HEK293 (cell line): ENCODE measurements at regions of chr6 and their contacts with region 1.

Region 1: GRCh38 chr6:31827286-31828079 is at the start of gene HSPA1B:
- H3K4me3 ChIP-seq: peak within 1 kb of the TSS; percentile 65
- H3K27ac ChIP-seq: peak within 1 kb of the TSS; percentile 69
- H3K4me1 ChIP-seq: no peaks in the 10 kb centered on the region
- CTCF ChIP-seq: peak; percentile 35; the same call in 1 of the 2 replicates

Region 2: DNA sequence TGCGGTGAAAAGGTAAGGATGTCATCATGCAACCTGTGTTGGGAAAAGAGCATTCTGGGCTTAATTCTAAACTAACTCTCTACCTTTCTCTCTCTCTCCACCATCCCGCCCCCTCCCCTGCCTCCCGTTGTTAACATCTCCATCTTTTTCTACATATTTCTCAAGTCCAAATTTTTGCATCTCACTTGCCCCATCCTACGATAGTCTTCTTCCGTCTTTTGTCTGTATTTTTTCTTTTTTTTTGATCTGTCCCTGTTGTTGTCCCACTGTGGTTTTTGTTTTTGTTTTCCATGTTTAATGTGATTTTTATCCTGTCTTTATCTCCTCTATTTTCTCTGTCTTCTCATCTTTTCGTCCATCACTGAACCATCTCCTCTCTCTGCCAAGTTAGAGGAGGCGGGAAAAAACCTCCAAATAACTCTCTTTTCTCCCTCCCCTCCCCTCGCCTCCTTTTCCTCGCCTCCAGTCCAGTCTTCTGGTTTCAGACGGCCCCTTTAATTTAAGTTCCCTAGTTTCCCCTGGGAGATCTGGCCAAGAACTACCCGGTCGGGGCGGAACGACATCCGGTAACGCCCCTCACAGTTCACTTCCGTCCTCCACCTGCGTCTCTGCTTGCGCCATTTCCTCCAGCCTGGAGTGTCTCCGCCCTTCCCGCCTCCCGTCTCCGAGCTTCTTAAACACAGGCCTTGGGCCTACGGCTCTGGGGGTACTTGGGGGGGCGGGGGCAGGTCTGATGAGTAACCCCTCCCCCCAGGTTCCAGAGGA is 280.3 kb before region 1 on chr6 and contains the start of gene NFKBIL1:
- CTCF ChIA-PET with region 1: interaction called, 5 read pairs
- POLR2A ChIA-PET with region 1: interaction called, 30 read pairs
- H3K4me3 ChIP-seq: peak within 1 kb of the TSS; percentile 47
- H3K27ac ChIP-seq: peak within 1 kb of the TSS; percentile 50
- H3K4me1 ChIP-seq: peaks cover 2% of the 10 kb centered on the region; the same call in 1 of the 2 replicates
- CTCF ChIP-seq: no peak; the same call in 1 of the 2 replicates

Region 3: GRCh38 chr6:31680840-31681671 is 146.4 kb before region 1 on chr6 and contains the start of gene LY6G5C:
- CTCF ChIA-PET with region 1: interaction called, 6 read pairs
- POLR2A ChIA-PET with region 1: interaction called, 15 read pairs
- H3K4me3 ChIP-seq: peak within 1 kb of the TSS; percentile 27
- H3K27ac ChIP-seq: no peak within 1 kb of the TSS; the same call in 1 of the 2 replicates
- H3K4me1 ChIP-seq: no peaks in the 10 kb centered on the region; the same call in 1 of the 2 replicates
- CTCF ChIP-seq: peak; percentile 68; the same call in 1 of the 2 replicates

Region 4: GRCh38 chr6:31739639-31740396 is 87.7 kb before region 1 on chr6 and contains the start of gene MSH5:
- CTCF ChIA-PET with region 1: interaction called, 17 read pairs
- POLR2A ChIA-PET with region 1: interaction called, 102 read pairs
- H3K4me3 ChIP-seq: peak within 1 kb of the TSS; percentile 61
- H3K27ac ChIP-seq: peak within 1 kb of the TSS; percentile 87
- H3K4me1 ChIP-seq: peaks cover 29% of the 10 kb centered on the region
- CTCF ChIP-seq: no peak

Region 5: DNA sequence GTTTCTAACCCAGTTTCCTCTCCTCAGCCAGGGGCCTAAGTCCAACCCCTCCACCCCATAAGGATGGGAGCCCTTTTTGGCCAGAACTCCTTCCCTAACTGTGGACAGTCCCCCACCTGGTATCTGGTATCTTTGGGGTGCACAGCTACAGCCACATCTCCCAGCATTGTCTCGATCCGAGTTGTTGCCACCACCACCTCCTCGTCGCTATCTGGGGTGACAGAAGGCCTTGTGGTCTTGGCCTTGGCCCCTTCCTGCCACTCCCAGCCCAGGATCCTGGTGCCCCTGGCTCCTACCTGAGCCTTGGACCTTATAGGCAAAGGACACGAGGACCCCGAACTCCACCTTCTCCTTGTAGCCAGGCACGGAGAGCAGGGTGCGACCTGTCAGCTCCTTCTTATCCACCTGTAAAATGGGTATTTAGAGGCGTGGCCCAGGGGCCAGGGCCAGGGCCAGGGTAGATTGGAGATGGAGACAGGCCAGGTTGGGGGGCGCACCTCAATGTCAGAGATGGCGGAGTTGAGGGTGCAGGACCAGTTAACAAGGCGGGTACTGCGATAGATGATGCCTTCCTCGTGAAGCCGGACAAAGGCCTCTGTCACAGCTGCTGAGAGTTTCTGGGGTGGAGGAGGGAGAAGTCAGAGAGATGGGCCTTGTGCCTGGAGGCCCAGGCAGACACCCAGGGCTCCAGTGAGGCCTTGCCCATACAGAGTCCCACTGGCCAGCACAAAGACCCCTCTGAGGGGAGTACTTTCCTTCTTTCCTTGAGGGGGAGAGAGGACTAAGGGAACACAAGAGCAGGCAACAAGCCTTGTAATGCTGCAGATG is 43.2 kb before region 1 on chr6:
- CTCF ChIA-PET with region 1: interaction called, 4 read pairs
- POLR2A ChIA-PET with region 1: interaction called, 38 read pairs
- H3K4me3 ChIP-seq: no peak overlapping the region
- H3K27ac ChIP-seq: no peak overlapping the region
- H3K4me1 ChIP-seq: no peaks in the 10 kb centered on the region
- CTCF ChIP-seq: no peak

Region 6: DNA sequence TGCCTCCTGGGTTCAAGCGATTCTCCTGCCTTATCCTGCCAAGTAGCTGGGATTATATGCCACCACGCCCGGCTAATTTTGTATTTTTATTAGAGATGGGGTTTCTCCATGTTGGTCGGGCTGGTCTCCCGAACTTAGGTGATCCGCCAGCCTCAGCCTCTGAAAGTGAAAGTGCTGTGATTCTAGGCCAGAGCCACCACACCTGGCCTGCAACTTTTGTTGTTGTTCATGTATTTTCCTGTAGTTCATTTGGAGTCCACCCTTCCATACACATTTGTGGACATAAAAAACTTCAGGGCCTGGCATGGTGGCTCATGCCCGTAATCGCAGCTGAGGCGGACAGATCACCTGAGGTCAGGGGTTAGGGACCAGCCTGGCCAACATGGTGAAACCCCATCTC is 14.6 kb after region 1 on chr6:
- CTCF ChIA-PET with region 1: interaction called, 6 read pairs
- POLR2A ChIA-PET with region 1: interaction called, 51 read pairs
- H3K4me3 ChIP-seq: no peak overlapping the region
- H3K27ac ChIP-seq: no peak overlapping the region
- H3K4me1 ChIP-seq: peaks cover 1% of the 10 kb centered on the region; the same call in 1 of the 2 replicates
- CTCF ChIP-seq: no peak

Region 7: GRCh38 chr6:31952140-31952805 is 124.8 kb after region 1 on chr6:
- CTCF ChIA-PET with region 1: interaction called, 18 read pairs
- POLR2A ChIA-PET with region 1: interaction called, 4 read pairs
- H3K4me3 ChIP-seq: no peak overlapping the region
- H3K27ac ChIP-seq: no peak overlapping the region
- H3K4me1 ChIP-seq: no peaks in the 10 kb centered on the region
- CTCF ChIP-seq: peak; percentile 77